ENCODE measurements at regions of chr10 and their contacts with region 1.

Region 1: GRCh38 chr10:4849555-4850242 is 23.7 kb downstream of the AKR1E2 start:
- DNase-seq: peak; percentile 79
- H3K27ac ChIP-seq: no peak overlapping the region
- CTCF ChIP-seq: peak; percentile 96

Region 2: DNA sequence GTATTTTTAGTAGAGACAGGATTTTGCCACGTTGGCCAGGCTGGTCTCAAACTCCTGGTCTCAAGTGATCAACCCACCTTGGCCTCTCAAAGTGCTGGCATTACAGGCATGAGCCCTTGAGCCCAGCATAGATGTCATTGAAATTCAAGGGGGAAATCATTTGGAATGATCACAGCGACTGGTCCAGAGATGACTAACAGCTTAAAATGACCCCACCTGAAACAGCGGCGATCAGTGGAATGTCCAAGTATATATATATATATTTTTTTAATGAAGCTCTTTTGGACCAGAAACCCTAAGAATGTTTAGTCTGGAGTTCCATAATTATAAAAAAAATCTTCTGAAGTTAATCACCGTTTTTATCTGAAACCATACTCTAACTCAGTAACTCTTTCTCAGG is 36.2 kb before region 1 on chr10:
- CTCF ChIA-PET with region 1: interaction called, 11 read pairs
- POLR2A ChIA-PET with region 1: interaction called, 6 read pairs
- DNase-seq: no peak
- H3K27ac ChIP-seq: no peak overlapping the region
- CTCF ChIP-seq: no peak

Region 3: GRCh38 chr10:4867520-4868356 is 18.0 kb after region 1 on chr10:
- CTCF ChIA-PET with region 1: interaction called, 15 read pairs
- POLR2A ChIA-PET with region 1: no interaction called
- DNase-seq: no peak
- H3K27ac ChIP-seq: no peak overlapping the region
- CTCF ChIP-seq: no peak

Region 4: GRCh38 chr10:4981722-4982471 is 132.2 kb after region 1 on chr10:
- CTCF ChIA-PET with region 1: interaction called, 15 read pairs
- POLR2A ChIA-PET with region 1: no interaction called
- DNase-seq: peak; percentile 9
- H3K27ac ChIP-seq: no peak overlapping the region
- CTCF ChIP-seq: peak; percentile 53

Region 5: DNA sequence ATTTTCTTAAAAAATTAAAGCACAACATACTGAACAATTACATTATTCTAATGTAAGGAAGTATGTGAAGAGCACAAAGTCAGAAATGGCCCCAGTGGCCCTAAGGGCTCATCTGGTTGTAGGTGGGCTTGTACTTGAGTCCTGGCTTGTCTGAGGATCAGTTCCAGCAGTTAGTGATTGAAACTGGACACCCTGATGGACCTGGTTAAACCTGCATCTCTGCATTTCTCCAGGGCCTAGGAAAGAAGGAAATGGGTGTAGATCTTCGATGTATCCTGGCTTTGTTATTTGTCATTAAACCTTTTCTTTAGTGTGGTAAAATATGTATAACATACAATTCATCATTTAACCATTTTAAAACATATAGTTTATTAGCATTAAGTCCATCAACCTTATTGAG is 163.7 kb after region 1 on chr10:
- CTCF ChIA-PET with region 1: no interaction called
- POLR2A ChIA-PET with region 1: no interaction called
- DNase-seq: no peak
- H3K27ac ChIP-seq: no peak overlapping the region
- CTCF ChIP-seq: no peak

Region 6: GRCh38 chr10:5094265-5095205 is 244.8 kb after region 1 on chr10 and contains the start of gene AKR1C3:
- CTCF ChIA-PET with region 1: interaction called, 15 read pairs
- POLR2A ChIA-PET with region 1: no interaction called
- DNase-seq: peak; percentile 53
- H3K27ac ChIP-seq: no peak within 1 kb of the TSS
- CTCF ChIP-seq: peak; percentile 67

Region 7: DNA sequence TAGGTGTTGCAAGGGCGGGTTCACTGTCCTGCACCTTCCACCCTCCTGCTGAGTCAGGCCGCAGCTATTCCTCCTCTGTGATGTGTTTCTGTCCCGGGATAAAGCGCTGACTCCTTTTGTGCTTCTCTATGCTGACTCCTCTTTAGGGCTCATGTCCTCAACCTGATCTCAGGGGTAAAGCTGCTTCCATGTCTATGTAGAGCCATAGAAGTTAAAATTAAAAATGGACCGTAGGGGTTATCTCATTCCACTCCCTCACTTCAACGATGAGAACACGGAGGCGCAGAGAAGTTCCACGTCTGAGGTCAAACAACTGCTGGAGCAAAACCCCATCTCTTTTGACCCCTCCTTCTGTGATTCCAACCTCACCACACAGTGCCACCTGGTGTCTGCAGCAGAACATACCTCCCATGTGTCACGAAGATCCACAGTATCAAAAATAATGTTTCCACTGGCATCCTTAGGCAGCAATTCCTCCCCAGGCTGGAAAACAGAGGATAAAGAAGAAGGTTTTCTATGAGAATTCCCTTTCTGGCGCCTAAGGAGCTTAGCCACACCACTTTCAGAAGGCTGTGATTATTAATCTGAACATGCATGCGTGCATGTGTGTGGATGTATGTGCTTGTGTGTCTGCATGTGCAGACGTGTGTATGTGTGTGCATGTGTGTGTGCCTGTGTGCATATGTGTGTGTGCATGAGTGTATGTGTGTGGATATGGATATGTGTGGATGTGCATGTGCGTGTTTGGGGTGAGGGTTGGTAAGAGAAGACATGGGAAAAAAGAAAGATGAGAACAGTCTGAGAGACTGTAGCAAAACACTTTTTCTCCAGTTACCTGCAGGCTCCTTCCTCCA is 433.8 kb after region 1 on chr10:
- CTCF ChIA-PET with region 1: interaction called, 16 read pairs
- POLR2A ChIA-PET with region 1: no interaction called
- DNase-seq: peak; percentile 65
- H3K27ac ChIP-seq: no peak overlapping the region
- CTCF ChIP-seq: peak; percentile 20; the same call in 1 of the 2 replicates

Region 8: GRCh38 chr10:5434017-5434753 is 584.5 kb after region 1 on chr10:
- CTCF ChIA-PET with region 1: interaction called, 15 read pairs
- POLR2A ChIA-PET with region 1: no interaction called
- DNase-seq: no peak
- H3K27ac ChIP-seq: no peak overlapping the region
- CTCF ChIP-seq: peak; percentile 71